HepG2 (cell line): ENCODE measurements at regions of chr7 and their contacts with region 1.

Region 1: DNA sequence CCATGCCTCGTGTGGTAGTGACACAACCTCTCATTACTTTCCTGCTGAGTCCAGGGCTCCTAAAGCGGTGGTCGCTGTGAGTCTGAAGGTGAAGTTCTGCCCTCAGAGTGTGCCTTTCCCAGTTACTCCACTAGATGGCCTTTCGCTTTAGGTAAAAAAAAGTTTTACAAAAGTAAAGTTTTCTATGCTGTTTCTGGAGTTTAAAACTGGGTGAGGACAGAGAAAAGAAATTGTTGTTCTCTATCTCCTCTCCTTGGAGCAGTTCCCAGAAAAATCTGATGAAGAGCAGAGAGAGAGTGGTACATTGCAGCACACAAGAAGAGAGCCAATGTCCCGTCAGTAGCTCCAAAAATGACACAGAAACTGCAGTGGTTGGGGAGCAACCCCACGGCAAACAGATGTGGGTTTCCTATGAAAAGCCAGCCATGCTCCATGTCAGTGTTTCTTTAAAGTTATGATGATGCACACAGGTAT is 257.1 kb downstream of the GLI3 start:
- DNase-seq: peak; percentile 3
- ATAC-seq: peak; percentile 85
- H3K4me3 ChIP-seq: no peak overlapping the region
- H3K27ac ChIP-seq: no peak overlapping the region
- H3K4me1 ChIP-seq: no peaks in the 10 kb centered on the region
- H3K27me3 ChIP-seq: peaks cover 0 to 4% of the 10 kb centered on the region in 2 experiments; a peak in 2 of 5 replicates
- CTCF ChIP-seq: peak; percentile 49
- EP300 ChIP-seq: no peak
- POLR2A ChIP-seq: no peak
- RAD21 ChIP-seq: no peak

Region 2: GRCh38 chr7:41760293-41760692 is 219.6 kb before region 1 on chr7:
- CTCF ChIA-PET with region 1: no interaction called
- POLR2A ChIA-PET with region 1: no interaction called
- in situ Hi-C with region 1: no loop called
- intact Hi-C with region 1: no loop called
- DNase-seq: no peak
- ATAC-seq: no peak
- H3K4me3 ChIP-seq: no peak overlapping the region
- H3K27ac ChIP-seq: no peak overlapping the region
- H3K4me1 ChIP-seq: no peaks in the 10 kb centered on the region
- H3K27me3 ChIP-seq: no peaks in the 10 kb centered on the region
- CTCF ChIP-seq: no peak
- EP300 ChIP-seq: no peak
- POLR2A ChIP-seq: no peak
- RAD21 ChIP-seq: no peak

Region 3: GRCh38 chr7:42690794-42691639 is 711.1 kb after region 1 on chr7:
- CTCF ChIA-PET with region 1: no interaction called
- POLR2A ChIA-PET with region 1: no interaction called
- in situ Hi-C with region 1: no loop called
- intact Hi-C with region 1: loop called (anchors 1 kb)
- DNase-seq: peak; percentile 16
- ATAC-seq: peak; percentile 92
- H3K4me3 ChIP-seq: no peak overlapping the region
- H3K27ac ChIP-seq: no peak overlapping the region
- H3K4me1 ChIP-seq: no peaks in the 10 kb centered on the region
- H3K27me3 ChIP-seq: no peaks in the 10 kb centered on the region
- CTCF ChIP-seq: peak; percentile 65
- EP300 ChIP-seq: no peak
- POLR2A ChIP-seq: no peak
- RAD21 ChIP-seq: no peak